Ascending aorta (tissue), 2 donors: ENCODE measurements at regions of chr5 and their contacts with region 1.

Region 1: DNA sequence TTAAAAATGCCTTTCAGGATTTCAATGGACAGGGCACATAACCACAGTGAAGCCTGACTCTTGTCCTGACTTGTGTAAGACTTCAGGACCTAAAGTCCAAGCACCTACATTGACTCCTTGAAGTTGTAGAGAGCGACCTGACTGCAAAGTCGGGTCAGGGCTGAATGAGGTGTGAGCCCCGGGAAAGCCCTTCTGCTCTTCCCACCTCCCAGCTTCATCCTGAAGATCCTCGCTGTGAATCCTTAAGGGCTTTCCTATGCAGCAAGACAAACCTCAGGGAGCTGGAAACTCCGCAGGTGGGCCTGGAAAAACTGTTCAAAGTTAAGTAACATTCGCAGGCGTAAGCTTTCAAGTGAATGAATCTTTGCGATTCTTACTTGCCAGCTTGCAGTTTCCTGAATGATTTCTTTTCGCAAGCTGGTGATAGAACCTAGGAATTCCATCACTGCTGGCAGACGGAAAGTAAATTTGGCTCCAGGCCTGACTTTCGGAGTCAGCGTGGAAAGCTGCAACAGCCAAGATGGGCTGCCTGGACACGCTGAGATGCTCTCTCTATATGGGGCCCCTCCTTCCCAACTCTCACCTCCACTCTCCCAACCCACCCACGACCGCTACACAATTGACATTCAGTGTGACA is 10.9 kb downstream of the SEMA5A start:
- DNase-seq: peak in 1 of 2 donors; percentile 71
- H3K4me3 ChIP-seq: peak overlapping the region; percentile 33 to 51
- H3K27ac ChIP-seq: peak overlapping the region in 1 of 2 donors; percentile 47
- H3K4me1 ChIP-seq: peaks cover 0 to 35% of the 10 kb centered on the region in 2 donors
- H3K27me3 ChIP-seq: no peaks in the 10 kb centered on the region
- CTCF ChIP-seq: no peak

Region 2: DNA sequence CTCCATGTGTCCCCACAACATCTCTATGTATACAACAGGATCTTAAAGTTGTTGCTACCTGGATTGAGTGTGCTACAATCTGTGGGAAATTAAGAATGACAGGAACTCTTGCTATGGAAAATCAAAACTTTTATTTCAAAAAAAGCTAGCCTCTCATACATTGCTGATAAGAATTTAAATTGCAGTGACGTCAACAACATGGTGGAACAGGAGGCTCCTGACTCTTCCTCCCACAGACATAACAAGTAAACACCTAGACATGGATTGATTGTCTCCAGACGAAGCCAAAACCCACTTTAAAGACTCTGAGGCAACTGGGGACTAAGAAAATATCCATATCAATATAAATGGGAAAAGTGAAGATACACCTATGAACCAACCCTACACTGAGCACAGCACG is 738.6 kb before region 1 on chr5:
- intact Hi-C with region 1: no loop called
- DNase-seq: no peak
- H3K4me3 ChIP-seq: no peak overlapping the region
- H3K27ac ChIP-seq: no peak overlapping the region
- H3K4me1 ChIP-seq: no peaks in the 10 kb centered on the region
- H3K27me3 ChIP-seq: no peaks in the 10 kb centered on the region
- CTCF ChIP-seq: no peak

Region 3: GRCh38 chr5:9182899-9183685 is 351.9 kb before region 1 on chr5:
- intact Hi-C with region 1: no loop called
- DNase-seq: no peak
- H3K4me3 ChIP-seq: no peak overlapping the region
- H3K27ac ChIP-seq: no peak overlapping the region
- H3K4me1 ChIP-seq: no peaks in the 10 kb centered on the region
- H3K27me3 ChIP-seq: no peaks in the 10 kb centered on the region
- CTCF ChIP-seq: no peak

Region 4: GRCh38 chr5:9437741-9438240 is 97.2 kb before region 1 on chr5:
- intact Hi-C with region 1: loop called (anchors 5 kb)
- DNase-seq: no peak
- H3K4me3 ChIP-seq: no peak overlapping the region
- H3K27ac ChIP-seq: no peak overlapping the region
- H3K4me1 ChIP-seq: peaks cover 0 to 8% of the 10 kb centered on the region in 2 donors
- H3K27me3 ChIP-seq: no peaks in the 10 kb centered on the region
- CTCF ChIP-seq: no peak